CD8-positive, alpha-beta T cell (primary cell): ENCODE measurements at regions of chr3 and their contacts with region 1.

Region 1: DNA sequence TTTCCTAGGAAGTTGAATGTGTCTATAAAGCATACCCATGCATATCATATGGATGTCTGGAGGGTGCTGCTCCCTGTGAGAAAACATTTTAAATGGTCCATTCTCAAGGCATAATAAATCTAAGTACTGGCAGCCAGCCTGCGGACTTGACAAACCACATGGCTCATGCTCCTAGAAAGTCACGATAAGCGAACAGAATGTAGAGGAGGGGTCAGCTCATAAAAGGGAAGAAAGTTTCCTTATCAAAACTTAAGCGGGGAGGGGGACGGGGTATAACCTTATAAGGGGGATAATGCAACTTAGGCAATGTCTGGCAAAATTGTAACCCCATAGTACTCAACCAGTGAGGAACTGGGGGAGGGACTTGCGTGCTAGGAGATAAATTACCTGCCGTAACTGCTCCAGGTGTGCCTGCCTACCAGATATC is 159.8 kb upstream of the LMCD1 start:
- DNase-seq: no peak
- ATAC-seq: no peak
- H3K4me3 ChIP-seq: no peak overlapping the region
- H3K4me3 Mint-ChIP-seq: no peak overlapping the region
- H3K27ac ChIP-seq: no peak overlapping the region
- H3K27ac Mint-ChIP-seq: no peak overlapping the region
- H3K4me1 ChIP-seq: no peaks in the 10 kb centered on the region
- H3K4me1 Mint-ChIP-seq: peaks cover 2% of the 10 kb centered on the region
- H3K27me3 ChIP-seq: no peaks in the 10 kb centered on the region
- H3K27me3 Mint-ChIP-seq: no peaks in the 10 kb centered on the region
- CTCF ChIP-seq: no peak

Region 2: DNA sequence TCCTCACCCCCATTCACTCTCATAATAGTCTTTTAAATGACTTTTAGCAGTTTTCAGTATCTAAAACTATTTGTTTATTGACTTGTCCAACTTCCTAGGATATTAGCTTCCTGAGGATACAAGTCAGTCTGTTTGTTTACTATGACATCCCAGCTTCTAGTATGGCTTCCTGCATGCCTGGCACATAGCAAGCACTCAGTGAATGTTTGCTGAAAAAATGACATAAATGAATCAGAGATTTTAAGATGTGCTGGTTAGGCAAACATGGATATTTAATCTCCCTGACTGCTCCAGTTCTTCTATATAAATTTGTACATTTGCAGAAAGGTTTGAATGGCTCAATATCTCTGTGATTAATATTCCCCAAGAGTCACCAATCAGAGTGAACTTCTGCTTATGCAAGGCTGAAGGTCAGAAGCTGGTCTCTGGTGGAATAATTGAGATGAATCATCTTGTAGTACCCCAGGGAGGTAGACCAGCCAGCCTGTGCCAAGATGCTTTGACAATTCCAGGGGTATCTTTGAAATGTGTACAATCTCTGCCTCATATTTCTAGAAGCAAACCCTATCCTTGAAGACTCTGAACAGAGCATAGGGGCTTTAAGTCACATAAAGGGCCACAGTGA is 59.2 kb before region 1 on chr3:
- CTCF ChIA-PET with region 1: no interaction called
- POLR2A ChIA-PET with region 1: no interaction called
- intact Hi-C with region 1: no loop called
- DNase-seq: no peak
- ATAC-seq: no peak
- H3K4me3 ChIP-seq: no peak overlapping the region
- H3K4me3 Mint-ChIP-seq: no peak overlapping the region
- H3K27ac ChIP-seq: no peak overlapping the region
- H3K27ac Mint-ChIP-seq: no peak overlapping the region
- H3K4me1 ChIP-seq: no peaks in the 10 kb centered on the region
- H3K4me1 Mint-ChIP-seq: no peaks in the 10 kb centered on the region
- H3K27me3 ChIP-seq: no peaks in the 10 kb centered on the region
- H3K27me3 Mint-ChIP-seq: no peaks in the 10 kb centered on the region
- CTCF ChIP-seq: no peak

Region 3: GRCh38 chr3:8359133-8359532 is 17.3 kb after region 1 on chr3:
- CTCF ChIA-PET with region 1: interaction called, 4 read pairs
- POLR2A ChIA-PET with region 1: interaction called, 4 read pairs
- intact Hi-C with region 1: loop called in 1 of 2 experiments (anchors 2 kb)
- DNase-seq: no peak
- ATAC-seq: no peak
- H3K4me3 ChIP-seq: no peak overlapping the region
- H3K4me3 Mint-ChIP-seq: no peak overlapping the region
- H3K27ac ChIP-seq: no peak overlapping the region
- H3K27ac Mint-ChIP-seq: peak overlapping the region; percentile 38
- H3K4me1 ChIP-seq: peaks cover 44% of the 10 kb centered on the region
- H3K4me1 Mint-ChIP-seq: peaks cover 68% of the 10 kb centered on the region
- H3K27me3 ChIP-seq: no peaks in the 10 kb centered on the region
- H3K27me3 Mint-ChIP-seq: no peaks in the 10 kb centered on the region
- CTCF ChIP-seq: no peak